ENCODE measurements at regions of chr11 and their contacts with region 1.

Region 1: DNA sequence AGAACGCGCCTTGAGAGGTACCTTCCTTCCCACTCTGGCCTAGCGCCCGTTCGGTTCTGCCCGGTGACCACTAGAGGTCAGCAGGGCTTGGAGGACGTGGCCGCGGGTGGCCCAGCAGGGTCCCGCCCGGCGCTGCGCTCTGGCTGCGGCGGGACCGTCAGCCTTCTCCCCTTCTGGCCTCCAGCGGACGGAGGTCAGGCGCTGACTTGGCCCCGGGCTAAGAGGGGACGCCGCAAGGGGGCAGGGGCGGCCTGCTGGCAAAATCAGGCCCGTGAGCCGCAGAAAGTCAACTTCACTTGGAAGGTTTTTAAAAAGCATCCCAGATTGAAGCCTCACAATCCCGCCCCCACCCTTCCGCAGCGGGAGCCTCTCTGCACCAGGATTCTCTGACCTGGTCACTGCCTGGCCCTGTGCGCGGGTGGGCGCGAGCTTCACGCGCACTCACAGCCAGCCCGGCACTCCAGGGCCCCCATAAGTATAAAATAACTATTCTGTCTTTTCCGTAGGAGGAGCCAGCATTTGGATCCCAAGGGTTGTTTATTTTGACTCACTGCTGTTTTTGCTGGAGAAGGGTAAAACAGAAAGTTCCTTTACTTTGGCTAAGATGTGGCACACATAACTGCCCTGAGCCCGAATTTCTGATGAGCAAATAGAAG is 23.2 kb upstream of the ZBTB16 start:
- DNase-seq: peak; percentile 73
- H3K4me3 ChIP-seq: peak overlapping the region; percentile 30 to 46 (median 45)
- H3K27ac ChIP-seq: peak overlapping the region; percentile 56
- H3K4me1 ChIP-seq: peaks cover 15% of the 10 kb centered on the region
- H3K27me3 ChIP-seq: peaks cover 0 to 1% of the 10 kb centered on the region in 2 experiments
- CTCF ChIP-seq: peak; percentile 91 to 93
- POLR2A ChIP-seq: no peak

Region 2: GRCh38 chr11:113974741-113975470 is 61.4 kb before region 1 on chr11 and contains the start of gene HTR3A:
- CTCF ChIA-PET with region 1: no interaction called
- POLR2A ChIA-PET with region 1: no interaction called
- dilution Hi-C with region 1: no loop called
- intact Hi-C with region 1: no loop called
- DNase-seq: peak; percentile 57
- H3K4me3 ChIP-seq: no peak within 1 kb of the TSS
- H3K27ac ChIP-seq: no peak within 1 kb of the TSS
- H3K4me1 ChIP-seq: peaks cover 4% of the 10 kb centered on the region
- H3K27me3 ChIP-seq: peaks cover 8 to 9% of the 10 kb centered on the region in 2 experiments
- CTCF ChIP-seq: no peak
- POLR2A ChIP-seq: no peak
- total RNA-seq, gene HTR3A: not detected in 2 replicates

Region 3: DNA sequence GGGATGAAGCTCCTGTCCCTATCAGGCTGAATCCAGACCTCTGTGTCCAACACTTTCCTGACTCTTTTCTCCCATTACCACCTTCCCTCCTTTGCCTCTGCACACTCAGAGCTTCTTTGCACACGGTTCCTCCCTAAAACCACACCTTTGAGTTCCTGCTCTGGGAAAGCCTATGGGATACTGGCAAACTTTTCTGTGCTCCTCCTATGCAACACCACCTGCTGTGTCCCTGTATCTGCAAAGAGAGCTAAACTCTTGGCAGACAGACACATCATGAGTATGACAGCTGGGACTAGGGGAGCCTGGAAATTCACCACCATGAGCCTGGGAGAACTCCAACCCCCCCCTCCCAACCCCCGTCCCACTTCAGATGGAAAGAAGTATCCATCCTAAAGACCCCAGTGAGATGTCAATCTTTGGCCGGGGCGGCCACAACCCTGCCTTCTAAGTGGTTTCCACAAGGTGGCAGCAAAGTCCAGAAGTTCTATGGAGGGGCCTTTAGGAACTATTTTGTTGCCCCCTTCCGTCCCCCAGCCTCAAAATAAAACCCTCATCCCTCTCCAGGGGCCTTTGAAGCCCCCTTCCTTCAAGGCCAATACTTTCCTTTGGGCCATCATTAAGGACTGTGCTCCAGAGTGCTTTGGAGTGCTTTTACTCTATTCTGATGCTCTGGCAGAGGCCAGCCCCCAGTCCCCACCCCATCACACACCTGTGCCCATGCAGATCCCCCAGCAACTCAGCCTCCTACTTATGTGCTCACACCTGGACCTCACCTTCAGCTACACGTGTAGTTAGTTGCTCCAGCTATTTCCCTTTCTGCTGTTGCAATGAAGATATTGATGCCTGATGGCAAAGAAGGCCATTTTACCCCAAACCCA is 42.0 kb before region 1 on chr11:
- CTCF ChIA-PET with region 1: no interaction called
- POLR2A ChIA-PET with region 1: interaction called, 3 read pairs
- dilution Hi-C with region 1: no loop called
- intact Hi-C with region 1: loop called (anchors 2 kb)
- DNase-seq: peak; percentile 11
- H3K4me3 ChIP-seq: no peak overlapping the region
- H3K27ac ChIP-seq: no peak overlapping the region
- H3K4me1 ChIP-seq: no peaks in the 10 kb centered on the region
- H3K27me3 ChIP-seq: peaks cover 2 to 4% of the 10 kb centered on the region in 2 experiments
- CTCF ChIP-seq: peak; percentile 50 to 69
- POLR2A ChIP-seq: no peak

Region 4: GRCh38 chr11:114080219-114080618 is 43.9 kb after region 1 on chr11:
- CTCF ChIA-PET with region 1: no interaction called
- POLR2A ChIA-PET with region 1: no interaction called
- dilution Hi-C with region 1: no loop called
- intact Hi-C with region 1: loop called (anchors 1 kb)
- DNase-seq: peak; percentile 80
- H3K4me3 ChIP-seq: no peak overlapping the region
- H3K27ac ChIP-seq: peak overlapping the region; percentile 94
- H3K4me1 ChIP-seq: peaks cover 38% of the 10 kb centered on the region
- H3K27me3 ChIP-seq: no peaks in the 10 kb centered on the region
- CTCF ChIP-seq: no peak
- POLR2A ChIP-seq: no peak

Region 5: GRCh38 chr11:114109206-114110090 is 73.2 kb after region 1 on chr11:
- CTCF ChIA-PET with region 1: no interaction called
- POLR2A ChIA-PET with region 1: no interaction called
- dilution Hi-C with region 1: no loop called
- intact Hi-C with region 1: no loop called
- DNase-seq: no peak
- H3K4me3 ChIP-seq: no peak overlapping the region
- H3K27ac ChIP-seq: no peak overlapping the region
- H3K4me1 ChIP-seq: peaks cover 20% of the 10 kb centered on the region
- H3K27me3 ChIP-seq: peaks cover 2% of the 10 kb centered on the region in 2 experiments
- CTCF ChIP-seq: no peak
- POLR2A ChIP-seq: no peak

Region 6: DNA sequence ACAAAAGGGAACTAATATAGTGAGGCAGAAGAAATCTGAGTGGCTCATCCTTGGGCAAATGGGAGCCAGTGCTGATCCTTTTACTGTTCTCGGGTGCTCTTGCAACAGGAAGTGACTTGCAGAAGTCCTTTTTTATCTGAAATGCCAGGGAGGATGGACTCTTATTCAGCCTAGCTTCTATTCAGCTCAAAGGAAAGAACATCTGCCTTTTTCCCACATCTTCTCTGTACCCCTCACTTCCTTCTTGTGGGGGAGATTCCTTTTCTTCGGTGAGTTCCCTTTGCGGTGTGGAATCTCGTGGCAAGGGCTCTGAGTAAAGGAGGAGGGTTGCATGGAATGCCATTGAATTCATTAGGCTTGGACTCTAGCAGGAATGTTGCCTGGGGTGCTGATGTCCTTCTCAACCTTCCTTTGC is 99.5 kb after region 1 on chr11:
- CTCF ChIA-PET with region 1: interaction called, 3 read pairs
- POLR2A ChIA-PET with region 1: no interaction called
- dilution Hi-C with region 1: no loop called
- intact Hi-C with region 1: loop called (anchors 1 kb)
- DNase-seq: no peak
- H3K4me3 ChIP-seq: no peak overlapping the region
- H3K27ac ChIP-seq: no peak overlapping the region
- H3K4me1 ChIP-seq: peaks cover 42% of the 10 kb centered on the region
- H3K27me3 ChIP-seq: no peaks in the 10 kb centered on the region
- CTCF ChIP-seq: no peak
- POLR2A ChIP-seq: no peak

Region 7: DNA sequence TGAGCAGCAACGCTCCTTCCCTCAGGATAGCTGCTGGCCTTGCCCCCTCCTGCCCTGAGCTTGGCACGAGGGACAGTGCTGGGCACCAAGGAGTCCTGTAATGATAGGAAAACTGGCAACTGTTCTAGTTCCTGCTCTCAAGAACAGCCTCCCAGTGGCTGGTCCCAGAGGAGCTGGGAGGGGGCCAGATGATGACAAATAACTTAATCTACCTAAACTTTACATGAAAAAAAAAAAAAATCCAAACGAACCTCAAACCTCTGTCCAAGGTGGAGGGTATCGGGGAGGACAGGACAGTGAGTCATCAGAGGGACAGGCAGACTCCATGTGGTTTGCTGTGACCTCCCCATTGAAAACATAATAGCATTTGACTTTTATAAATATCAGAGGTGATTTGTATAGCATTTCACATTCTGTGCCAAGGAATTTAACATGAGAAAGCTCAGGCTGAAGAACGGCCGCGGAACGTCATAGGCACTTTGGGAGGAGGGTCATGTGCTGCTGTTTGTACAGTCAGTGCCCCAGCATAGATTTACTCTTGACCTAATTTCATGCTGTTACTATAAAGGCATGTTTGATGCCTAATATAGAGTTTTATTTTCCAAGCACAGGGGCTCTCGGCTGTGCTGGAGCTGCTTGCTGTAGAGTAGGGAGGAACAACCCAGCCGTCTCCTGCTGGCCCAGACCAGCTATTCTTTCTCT is 161.7 kb after region 1 on chr11:
- CTCF ChIA-PET with region 1: interaction called, 7 read pairs
- POLR2A ChIA-PET with region 1: no interaction called
- dilution Hi-C with region 1: no loop called
- intact Hi-C with region 1: loop called (anchors 1 kb)
- DNase-seq: peak; percentile 96
- H3K4me3 ChIP-seq: no peak overlapping the region
- H3K27ac ChIP-seq: peak overlapping the region; percentile 83
- H3K4me1 ChIP-seq: peaks cover 26% of the 10 kb centered on the region
- H3K27me3 ChIP-seq: no peaks in the 10 kb centered on the region
- CTCF ChIP-seq: no peak
- POLR2A ChIP-seq: peak; percentile 21

Measured in endothelial cell of umbilical vein (primary cell).